ENCODE measurements at regions of chr1 and their contacts with region 1.

Region 1: DNA sequence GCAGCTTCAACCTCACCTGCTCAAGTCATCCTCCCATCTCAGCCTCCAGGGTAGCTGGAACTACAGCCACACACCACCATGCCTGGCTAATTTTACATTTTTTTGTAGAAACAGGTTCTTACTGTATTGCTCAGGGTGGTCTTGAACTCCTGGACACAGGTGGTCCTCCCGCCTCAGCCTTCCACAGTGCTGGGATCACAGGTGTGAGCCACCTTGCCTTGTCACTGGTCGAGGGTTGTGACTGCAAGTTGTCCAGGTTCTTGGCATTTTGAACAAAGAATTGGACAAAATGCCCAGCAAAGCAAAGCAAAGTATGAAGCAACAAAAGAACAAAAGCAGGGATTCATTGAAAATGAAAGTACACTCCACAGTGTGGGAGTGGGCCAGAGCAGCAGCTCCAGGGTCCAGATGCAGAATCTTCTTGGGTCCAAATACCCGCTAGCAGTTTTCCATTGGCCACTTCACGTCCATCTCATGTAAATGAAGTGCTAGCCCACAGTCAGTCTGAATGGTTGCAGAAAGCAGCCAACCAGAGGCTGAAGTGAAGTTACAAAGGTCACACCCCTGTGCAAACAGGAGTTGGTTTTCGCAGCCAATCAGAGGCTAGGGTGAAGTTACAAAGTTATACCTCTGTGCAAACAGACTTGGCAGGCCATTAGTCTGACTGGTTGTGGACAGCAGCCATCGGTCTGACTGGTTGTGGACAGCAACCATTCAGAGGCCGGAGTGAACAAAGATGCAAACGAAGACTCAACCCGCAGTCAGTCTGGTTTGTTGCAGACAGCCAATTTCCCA is 109.5 kb upstream of the KIF26B start:
- DNase-seq: no peak
- H3K4me3 ChIP-seq: no peak overlapping the region
- H3K27ac ChIP-seq: no peak overlapping the region
- H3K4me1 ChIP-seq: no peaks in the 10 kb centered on the region
- H3K27me3 ChIP-seq: no peaks in the 10 kb centered on the region
- CTCF ChIP-seq: no peak

Region 2: DNA sequence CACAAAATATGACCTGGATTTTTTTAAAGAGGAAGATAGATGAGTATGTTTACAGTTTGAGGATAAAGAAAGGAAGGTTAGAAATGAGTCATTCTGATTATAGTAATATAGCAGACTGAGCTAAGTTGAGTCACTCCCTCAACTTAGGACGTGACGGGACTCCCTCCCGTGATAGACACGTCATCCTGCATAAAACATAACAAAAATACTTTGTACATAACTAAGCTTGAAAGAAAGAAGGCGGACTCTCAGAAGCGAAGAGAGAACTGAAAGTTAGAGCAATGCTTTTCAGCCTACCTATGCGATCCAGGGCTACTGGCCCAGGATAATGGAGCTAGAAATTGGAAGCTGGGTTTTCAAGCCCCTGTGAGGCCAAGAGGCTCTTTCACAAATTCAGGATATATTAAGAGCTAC is 445.3 kb before region 1 on chr1:
- dilution Hi-C with region 1: loop called (anchors 25 kb)
- DNase-seq: peak; percentile 72
- H3K4me3 ChIP-seq: peak overlapping the region in 2 of 3 experiments; percentile 22 to 39
- H3K27ac ChIP-seq: peak overlapping the region; percentile 88
- H3K4me1 ChIP-seq: peaks cover 10% of the 10 kb centered on the region
- H3K27me3 ChIP-seq: no peaks in the 10 kb centered on the region
- CTCF ChIP-seq: no peak

Region 3: DNA sequence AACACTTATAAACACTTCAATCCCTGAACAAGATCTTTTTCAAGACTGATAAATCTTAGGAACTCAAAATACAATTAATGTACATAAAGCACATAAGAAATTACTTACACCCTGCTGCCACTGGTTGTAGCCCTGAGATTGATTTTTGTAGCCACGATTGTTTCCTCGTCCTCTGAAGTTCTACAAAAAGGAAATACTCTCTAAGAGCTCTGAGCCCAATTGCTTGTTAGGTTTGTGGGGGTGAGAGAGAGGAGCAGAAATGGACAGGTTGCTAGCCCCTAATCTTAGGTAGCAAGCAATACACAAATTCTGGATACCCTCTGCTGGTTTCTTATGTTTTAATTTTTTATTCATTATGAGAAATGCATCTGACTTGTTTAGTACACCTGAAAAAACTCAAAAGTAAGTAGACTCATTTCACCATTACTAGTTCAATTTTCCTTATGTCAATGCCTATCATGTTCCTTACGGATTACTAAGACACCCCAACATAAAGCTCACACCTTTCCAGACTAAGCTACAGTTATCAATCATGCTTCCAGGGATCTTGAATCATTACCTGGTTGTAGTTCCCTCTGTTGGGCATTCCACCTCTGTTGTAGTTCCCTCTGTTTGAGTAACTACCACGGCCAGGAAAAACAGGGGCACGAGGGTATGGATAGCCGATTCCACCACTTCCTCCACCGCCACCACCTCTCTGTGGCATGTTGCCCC is 190.3 kb before region 1 on chr1:
- dilution Hi-C with region 1: loop called (anchors 10 kb)
- DNase-seq: no peak
- H3K4me3 ChIP-seq: no peak overlapping the region
- H3K27ac ChIP-seq: no peak overlapping the region
- H3K4me1 ChIP-seq: peaks cover 2% of the 10 kb centered on the region
- H3K27me3 ChIP-seq: no peaks in the 10 kb centered on the region
- CTCF ChIP-seq: no peak

Measured in keratinocyte (primary cell).